Activated T-helper 2 cell treated with anti-CD3 and anti-CD28 coated beads, Interferon-gamma antibody, Interleukin-2, Interleukin-4, amounts not matched to agents 10 μg/mL and 5 μg/mL and 100 μg/mL, durations not matched to agents 14 hours and 24 hours and 36 hours (primary cell): ENCODE measurements at regions of chrX and their contacts with region 1.

Region 1: DNA sequence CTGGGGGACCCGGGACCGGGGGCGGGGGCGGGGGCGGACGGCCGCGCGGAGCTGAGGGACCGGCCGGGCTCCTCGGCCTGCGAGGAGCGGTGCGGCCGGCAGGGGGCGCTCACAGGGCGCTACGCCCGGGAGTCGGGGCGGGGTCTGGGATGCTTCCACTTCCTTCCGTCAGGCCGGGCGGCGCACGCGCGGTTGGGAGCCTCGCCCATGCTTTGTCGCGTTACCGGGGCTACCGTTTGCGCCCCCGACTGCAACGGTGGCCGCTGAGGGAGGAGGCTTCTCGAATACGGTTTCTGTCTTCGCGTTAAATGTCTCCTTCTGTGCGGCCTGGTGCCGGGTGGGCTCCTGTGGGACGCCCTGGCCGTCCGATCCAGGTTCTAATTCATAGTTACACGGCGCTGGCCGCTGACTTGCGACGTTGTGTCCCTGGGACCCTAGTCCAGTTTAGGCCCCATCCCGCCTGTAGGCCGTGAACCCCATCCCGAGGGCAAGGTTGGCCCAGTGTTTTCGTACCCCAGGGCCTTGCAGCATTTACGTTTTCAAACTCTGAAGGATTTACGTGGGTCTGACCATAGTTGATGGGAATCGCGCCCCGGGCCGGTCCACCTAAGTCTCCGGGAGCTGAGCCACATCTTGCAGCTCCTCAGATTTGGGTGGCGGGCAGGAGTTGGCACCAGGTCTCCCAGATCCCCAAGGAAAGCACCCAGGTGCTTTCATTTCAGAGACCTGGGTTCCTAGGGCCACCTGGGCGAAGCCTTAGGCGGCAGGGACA is 549 bp downstream of the MSL3 start:
- DNase-seq: peak; percentile 82
- H3K4me3 Mint-ChIP-seq: peak overlapping the region; percentile 97
- H3K27ac Mint-ChIP-seq: peak overlapping the region; percentile 77
- H3K4me1 Mint-ChIP-seq: peaks cover 22% of the 10 kb centered on the region
- H3K27me3 Mint-ChIP-seq: peaks cover 24% of the 10 kb centered on the region

Region 2: GRCh38 chrX:11111038-11111851 is 647.3 kb before region 1 on chrX and contains the start of gene HCCS:
- intact Hi-C with region 1: loop called (anchors 10 kb)
- DNase-seq: peak; percentile 77
- H3K4me3 Mint-ChIP-seq: no peak within 1 kb of the TSS
- H3K27ac Mint-ChIP-seq: peak within 1 kb of the TSS; percentile 89
- H3K4me1 Mint-ChIP-seq: peaks cover 14% of the 10 kb centered on the region
- H3K27me3 Mint-ChIP-seq: no peaks in the 10 kb centered on the region
- total RNA-seq, gene HCCS: 24.4 and 26.1 TPM in 2 replicates

Region 3: DNA sequence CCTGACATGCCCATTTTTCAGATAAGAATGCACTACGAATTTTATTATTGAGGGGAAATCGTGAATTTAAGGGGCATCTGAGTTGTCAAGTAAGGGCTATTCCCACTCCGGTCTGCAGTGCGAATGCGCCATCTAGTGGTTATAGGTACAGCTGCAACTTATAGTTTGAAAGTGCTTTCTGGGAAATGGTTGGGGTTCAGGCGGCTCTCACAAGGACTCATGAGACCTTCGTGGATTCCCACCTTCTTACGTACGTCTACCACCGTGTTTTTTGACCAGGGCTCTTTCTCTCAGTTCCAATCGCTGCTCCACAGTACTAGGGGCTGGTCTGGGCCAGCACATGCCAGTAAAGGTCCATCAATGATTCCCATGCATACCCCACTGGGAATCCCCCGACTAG is 11.7 kb after region 1 on chrX:
- intact Hi-C with region 1: loop called (anchors 1 kb)
- DNase-seq: no peak
- H3K4me3 Mint-ChIP-seq: no peak overlapping the region
- H3K27ac Mint-ChIP-seq: peak overlapping the region; percentile 60
- H3K4me1 Mint-ChIP-seq: peaks cover 28% of the 10 kb centered on the region
- H3K27me3 Mint-ChIP-seq: no peaks in the 10 kb centered on the region

Region 4: DNA sequence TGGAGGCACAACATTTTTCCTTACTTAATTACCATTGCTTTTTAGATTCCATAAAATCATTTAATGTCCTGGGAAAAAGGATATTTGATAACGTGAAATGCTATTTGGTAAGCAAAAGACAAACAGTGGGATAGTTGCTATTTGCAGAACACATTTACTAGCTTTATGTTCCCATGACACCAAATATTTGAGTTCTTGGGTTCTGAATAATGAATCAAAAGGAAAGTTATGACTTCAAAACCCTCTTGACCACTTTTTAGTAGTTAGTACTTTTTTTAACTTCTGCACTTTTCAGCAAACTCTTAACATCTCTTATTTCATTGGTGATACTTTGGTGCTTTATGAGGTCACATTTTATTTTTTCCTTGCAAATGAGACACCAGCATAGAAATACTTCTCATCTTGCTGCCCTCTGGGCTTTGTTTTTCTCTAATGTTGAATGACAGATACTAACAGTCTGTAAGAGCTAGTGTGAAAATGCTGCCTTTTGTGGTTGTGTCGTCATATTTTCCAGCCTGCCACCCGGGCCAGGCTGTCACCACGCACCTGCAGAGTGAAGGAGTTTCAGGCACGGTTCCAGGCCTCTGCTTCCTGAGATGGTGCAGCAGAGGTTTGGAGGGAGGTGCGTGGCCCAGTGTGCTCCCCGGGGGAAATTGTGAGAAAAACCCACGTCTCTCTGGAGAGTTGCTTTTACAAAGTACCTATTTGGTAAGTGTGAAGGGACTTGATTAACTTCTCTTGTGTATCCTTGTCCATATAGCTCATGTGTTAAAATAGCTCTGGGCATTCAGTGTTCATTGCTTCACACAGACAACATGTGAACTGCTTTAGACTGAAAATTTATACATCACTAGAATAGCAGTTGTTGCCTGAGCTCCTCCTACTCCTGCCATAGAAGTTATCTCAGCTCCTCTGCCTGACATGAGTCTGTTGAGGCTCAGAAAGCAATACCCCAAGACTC is 34.2 kb after region 1 on chrX:
- intact Hi-C with region 1: loop called (anchors 2 kb)
- DNase-seq: peak; percentile 45
- H3K4me3 Mint-ChIP-seq: no peak overlapping the region
- H3K27ac Mint-ChIP-seq: peak overlapping the region; percentile 87
- H3K4me1 Mint-ChIP-seq: peaks cover 20% of the 10 kb centered on the region
- H3K27me3 Mint-ChIP-seq: no peaks in the 10 kb centered on the region

Region 5: GRCh38 chrX:11929476-11929875 is 170.9 kb after region 1 on chrX:
- intact Hi-C with region 1: no loop called
- DNase-seq: no peak
- H3K4me3 Mint-ChIP-seq: no peak overlapping the region
- H3K27ac Mint-ChIP-seq: no peak overlapping the region
- H3K4me1 Mint-ChIP-seq: no peaks in the 10 kb centered on the region
- H3K27me3 Mint-ChIP-seq: no peaks in the 10 kb centered on the region